ENCODE measurements at regions of chr7 and their contacts with region 1.

Region 1: DNA sequence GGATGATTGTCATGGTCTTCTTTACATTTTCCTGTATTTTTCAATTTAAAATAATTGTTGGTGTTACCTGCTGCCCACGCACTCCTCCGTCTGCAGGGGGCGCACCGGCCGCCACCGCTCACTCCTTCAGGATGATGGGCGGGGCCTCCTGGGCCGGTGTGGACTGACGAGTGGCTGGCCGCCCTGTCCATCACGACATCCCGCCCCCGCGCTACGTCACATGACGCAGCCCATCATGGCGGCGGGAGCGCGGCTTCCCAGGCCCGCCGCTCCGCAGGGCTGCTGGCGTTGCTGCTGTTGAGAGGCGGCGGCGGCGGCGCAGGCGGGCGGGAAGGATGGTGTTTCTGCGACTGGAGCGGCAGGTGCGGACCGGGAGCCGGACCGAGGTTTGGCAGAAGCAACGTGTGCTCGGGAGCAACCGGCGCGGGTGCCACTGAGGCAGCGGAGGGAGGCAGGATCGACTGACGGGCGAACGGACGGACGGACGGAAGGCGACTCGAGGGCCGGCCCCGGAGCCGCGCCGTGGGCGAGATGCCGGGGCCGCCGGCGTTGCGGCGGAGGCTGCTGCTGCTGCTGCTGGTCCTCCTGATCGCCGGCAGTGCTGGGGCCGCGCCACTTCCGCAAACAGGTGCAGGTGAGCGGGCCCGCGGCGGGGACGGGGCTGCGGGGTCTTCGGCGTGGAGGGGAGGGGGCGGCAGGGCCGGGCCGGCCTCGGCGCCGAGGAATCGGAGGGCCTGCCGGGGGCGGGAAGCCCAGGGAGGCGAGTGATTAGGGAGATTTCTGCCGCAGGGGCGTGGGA is at the start of gene LMTK2:
- DNase-seq: peak; percentile 93
- H3K4me3 Mint-ChIP-seq: peak within 1 kb of the TSS; percentile 90
- H3K27ac Mint-ChIP-seq: peak within 1 kb of the TSS; percentile 79
- H3K4me1 Mint-ChIP-seq: peaks cover 12% of the 10 kb centered on the region
- H3K27me3 Mint-ChIP-seq: no peaks in the 10 kb centered on the region
- CTCF ChIP-seq: peak; percentile 84
- total RNA-seq, gene LMTK2: 16.8 and 21.6 TPM in 2 replicates

Region 2: GRCh38 chr7:98086281-98086718 is 20.5 kb before region 1 on chr7:
- CTCF ChIA-PET with region 1: interaction called, 15 read pairs
- POLR2A ChIA-PET with region 1: interaction called, 5 read pairs
- intact Hi-C with region 1: no loop called
- DNase-seq: peak; percentile 79
- H3K4me3 Mint-ChIP-seq: no peak overlapping the region
- H3K27ac Mint-ChIP-seq: peak overlapping the region; percentile 91
- H3K4me1 Mint-ChIP-seq: peaks cover 8% of the 10 kb centered on the region
- H3K27me3 Mint-ChIP-seq: no peaks in the 10 kb centered on the region
- CTCF ChIP-seq: no peak

Region 3: DNA sequence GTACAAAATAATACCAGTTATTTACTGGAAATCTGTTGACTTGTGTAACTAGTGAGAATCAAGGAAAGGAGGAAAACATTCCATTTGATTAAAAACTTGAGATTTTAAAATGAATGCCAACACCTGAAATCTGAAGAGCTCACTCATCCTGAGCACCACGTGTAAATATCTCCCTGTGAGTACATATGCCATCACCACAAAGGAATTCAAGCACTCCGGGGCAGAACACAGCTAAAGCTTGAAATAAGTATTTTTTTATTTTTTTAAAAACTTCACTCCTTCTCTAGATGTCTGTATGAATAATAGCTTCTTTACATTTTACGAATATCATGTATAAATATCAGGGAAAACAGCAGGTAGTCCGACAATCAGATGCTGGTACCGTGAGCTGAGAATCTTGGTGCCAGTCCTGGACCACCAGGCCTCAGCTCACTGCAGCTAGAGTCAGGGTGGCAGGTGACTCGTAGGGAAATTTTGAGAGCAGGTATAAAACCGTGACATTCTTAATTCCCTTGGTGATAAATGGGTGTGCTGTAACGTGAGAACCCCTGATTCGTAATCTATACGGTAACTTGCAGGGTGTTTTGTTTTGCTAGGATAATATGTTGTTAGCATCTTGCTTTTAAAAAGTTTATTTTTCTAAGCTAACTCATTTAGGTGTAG is 12.5 kb after region 1 on chr7:
- CTCF ChIA-PET with region 1: interaction called, 38 read pairs
- POLR2A ChIA-PET with region 1: interaction called, 37 read pairs
- intact Hi-C with region 1: no loop called
- DNase-seq: peak; percentile 59
- H3K4me3 Mint-ChIP-seq: peak overlapping the region; percentile 50
- H3K27ac Mint-ChIP-seq: peak overlapping the region; percentile 87
- H3K4me1 Mint-ChIP-seq: peaks cover 42% of the 10 kb centered on the region
- H3K27me3 Mint-ChIP-seq: no peaks in the 10 kb centered on the region
- CTCF ChIP-seq: no peak

Region 4: DNA sequence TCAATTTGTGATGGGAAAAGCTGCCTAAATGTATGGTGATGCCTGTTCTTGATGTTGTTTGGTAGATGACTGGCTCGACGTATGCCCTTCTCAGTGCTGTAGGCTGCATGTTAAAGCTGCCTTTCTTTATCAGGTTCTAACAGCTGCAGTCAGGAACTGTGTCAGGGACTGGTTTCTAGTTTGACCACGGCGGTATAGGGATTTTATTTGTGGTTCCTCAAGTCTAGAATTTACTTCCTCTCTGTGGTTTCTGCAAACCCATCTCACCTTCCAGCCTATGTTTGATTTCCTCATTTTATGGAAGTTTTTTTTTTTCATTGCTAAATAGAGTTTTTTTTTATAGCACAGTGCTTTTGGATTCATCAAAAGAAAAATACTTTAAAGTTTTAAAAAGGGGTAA is 26.3 kb after region 1 on chr7:
- CTCF ChIA-PET with region 1: interaction called, 26 read pairs
- POLR2A ChIA-PET with region 1: interaction called, 18 read pairs
- intact Hi-C with region 1: no loop called
- DNase-seq: no peak
- H3K4me3 Mint-ChIP-seq: peak overlapping the region; percentile 33
- H3K27ac Mint-ChIP-seq: peak overlapping the region; percentile 91
- H3K4me1 Mint-ChIP-seq: peaks cover 35% of the 10 kb centered on the region
- H3K27me3 Mint-ChIP-seq: no peaks in the 10 kb centered on the region
- CTCF ChIP-seq: no peak